Panc1 (cell line): ENCODE measurements at regions of chr22 and their contacts with region 1.

Region 1: DNA sequence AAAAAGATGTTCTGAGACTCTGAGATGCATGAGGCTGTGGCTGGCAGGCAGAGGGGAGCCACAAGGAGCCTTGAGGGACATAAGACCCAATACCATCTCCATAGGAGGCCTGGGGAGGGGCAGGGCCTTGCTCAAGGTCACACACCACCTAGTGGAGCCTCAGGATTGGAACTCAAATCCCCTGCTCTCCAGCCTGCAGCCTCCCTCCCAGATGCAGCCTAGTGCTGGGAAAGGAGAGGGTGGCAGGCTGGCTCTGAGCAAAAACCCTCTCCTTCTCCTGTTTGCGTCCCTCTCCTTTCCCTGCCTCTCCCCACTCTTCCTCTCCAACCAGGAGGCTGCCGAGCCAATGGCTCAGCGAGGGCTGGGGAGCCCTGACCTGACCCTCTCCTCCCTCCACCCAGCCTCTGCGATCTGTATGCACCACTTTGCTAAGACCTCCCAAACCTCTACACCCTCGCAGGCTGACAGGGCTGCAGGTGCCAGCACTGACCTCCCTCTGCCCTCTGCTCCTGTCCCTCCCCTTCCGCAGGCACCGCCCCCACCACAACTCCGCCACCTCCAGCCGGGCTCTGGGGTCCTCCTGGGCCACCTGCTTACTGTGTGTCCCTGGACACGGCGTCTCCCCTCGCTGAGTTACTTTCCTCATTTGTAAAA is 14.7 kb downstream of the IGLL1 start:
- DNase-seq: no peak
- ATAC-seq: peak; percentile 71
- H3K4me3 ChIP-seq: peak overlapping the region; percentile 37 to 48
- H3K27ac ChIP-seq: no peak overlapping the region
- H3K4me1 ChIP-seq: no peaks in the 10 kb centered on the region
- H3K27me3 ChIP-seq: no peaks in the 10 kb centered on the region
- CTCF ChIP-seq: no peak; the same call in 1 of the 2 replicates

Region 2: GRCh38 chr22:23591201-23591791 is 25.9 kb after region 1 on chr22:
- CTCF ChIA-PET with region 1: interaction called, 11 read pairs
- POLR2A ChIA-PET with region 1: no interaction called
- in situ Hi-C with region 1: no loop called
- intact Hi-C with region 1: no loop called
- DNase-seq: peak; percentile 38
- ATAC-seq: peak; percentile 89
- H3K4me3 ChIP-seq: no peak overlapping the region
- H3K27ac ChIP-seq: no peak overlapping the region
- H3K4me1 ChIP-seq: no peaks in the 10 kb centered on the region
- H3K27me3 ChIP-seq: no peaks in the 10 kb centered on the region
- CTCF ChIP-seq: peak; percentile 89